HepG2 (cell line): ENCODE measurements at regions of chr15 and their contacts with region 1.

Region 1: DNA sequence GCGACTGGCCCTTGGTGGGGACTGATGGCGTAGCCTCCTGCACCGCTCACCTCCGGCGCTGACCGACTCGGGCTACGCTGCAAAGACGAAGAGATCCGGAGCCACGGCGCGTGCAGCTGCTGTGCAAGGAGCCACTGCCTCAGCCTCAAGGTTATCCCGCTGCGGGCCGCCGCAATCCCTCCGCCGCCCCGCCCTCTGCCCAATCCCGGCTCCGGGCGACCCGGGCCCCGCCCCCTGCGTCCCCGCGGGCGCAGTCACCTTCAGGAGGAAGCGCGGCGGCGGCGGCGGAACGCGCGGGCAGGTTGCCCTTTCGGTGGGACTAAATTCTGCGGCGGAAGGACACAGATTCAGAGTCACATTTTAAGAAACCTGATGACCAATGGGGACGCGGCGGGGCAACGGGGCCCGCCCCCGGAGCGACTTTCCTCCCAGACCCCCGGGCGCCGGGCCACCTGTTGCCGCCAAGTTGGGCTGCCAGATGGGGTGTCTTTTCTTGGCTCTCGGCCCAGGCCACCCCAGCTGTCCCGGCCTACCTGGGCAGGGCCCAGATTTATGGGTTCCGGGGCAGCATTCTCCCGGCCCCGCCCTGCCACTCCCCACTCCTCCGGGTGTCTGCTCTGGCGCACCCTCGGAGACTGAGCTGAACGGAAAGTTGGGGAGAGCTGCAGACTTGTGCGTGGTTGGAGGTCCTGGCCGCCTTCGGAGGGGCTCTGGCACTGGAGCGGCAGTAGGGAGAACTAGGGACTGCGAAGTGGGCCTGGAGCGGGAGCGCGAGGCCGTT is at the start of gene PKM:
- DNase-seq: peak; percentile 93
- ATAC-seq: peak; percentile 79
- H3K4me3 ChIP-seq: peak within 1 kb of the TSS; percentile 81 to 99 (median 96)
- H3K27ac ChIP-seq: peak within 1 kb of the TSS; percentile 77
- H3K4me1 ChIP-seq: peaks cover 60% of the 10 kb centered on the region
- H3K27me3 ChIP-seq: no peaks in the 10 kb centered on the region; a peak in 1 of 5 replicates
- CTCF ChIP-seq: peak; percentile 21; the same call in 1 of the 2 replicates
- EP300 ChIP-seq: 0 out of 4 replicates have a peak, but pooled peaks of 1 of the 2 experiments have one; percentile 18
- POLR2A ChIP-seq: peak; percentile 97 to 99
- RAD21 ChIP-seq: peak; percentile 30; the same call in 1 of the 2 replicates
- total RNA-seq, gene PKM: 488 and 574 TPM in 2 replicates

Region 2: GRCh38 chr15:72110355-72110754 is 120.9 kb before region 1 on chr15:
- CTCF ChIA-PET with region 1: no interaction called
- POLR2A ChIA-PET with region 1: no interaction called
- in situ Hi-C with region 1: no loop called
- intact Hi-C with region 1: loop called (anchors 1 kb)
- DNase-seq: peak; percentile 54
- ATAC-seq: peak; percentile 63
- H3K4me3 ChIP-seq: no peak overlapping the region
- H3K27ac ChIP-seq: no peak overlapping the region
- H3K4me1 ChIP-seq: peaks cover 8% of the 10 kb centered on the region; the same call in 1 of the 2 replicates
- H3K27me3 ChIP-seq: no peaks in the 10 kb centered on the region
- CTCF ChIP-seq: no peak
- EP300 ChIP-seq: no peak
- POLR2A ChIP-seq: no peak
- RAD21 ChIP-seq: no peak

Region 3: GRCh38 chr15:72199711-72200212 is 31.5 kb before region 1 on chr15:
- CTCF ChIA-PET with region 1: no interaction called
- POLR2A ChIA-PET with region 1: interaction called, 9 read pairs
- in situ Hi-C with region 1: no loop called
- intact Hi-C with region 1: loop called (anchors 1 kb)
- DNase-seq: peak; percentile 76
- ATAC-seq: peak; percentile 59
- H3K4me3 ChIP-seq: no peak overlapping the region
- H3K27ac ChIP-seq: no peak overlapping the region
- H3K4me1 ChIP-seq: peaks cover 24% of the 10 kb centered on the region
- H3K27me3 ChIP-seq: peaks cover 6 to 11% of the 10 kb centered on the region in 2 experiments; a peak in 3 of 5 replicates
- CTCF ChIP-seq: peak; percentile 92
- EP300 ChIP-seq: 0 out of 4 replicates have a peak, but pooled peaks of 1 of the 2 experiments have one; percentile 11
- POLR2A ChIP-seq: no peak; a peak in 1 of 4 replicates
- RAD21 ChIP-seq: peak; percentile 90

Region 4: GRCh38 chr15:72206677-72207000 is 24.6 kb before region 1 on chr15:
- CTCF ChIA-PET with region 1: no interaction called
- POLR2A ChIA-PET with region 1: interaction called, 33 read pairs
- in situ Hi-C with region 1: no loop called
- intact Hi-C with region 1: no loop called
- DNase-seq: no peak
- ATAC-seq: no peak
- H3K4me3 ChIP-seq: no peak overlapping the region
- H3K27ac ChIP-seq: no peak overlapping the region
- H3K4me1 ChIP-seq: peaks cover 14% of the 10 kb centered on the region; the same call in 1 of the 2 replicates
- H3K27me3 ChIP-seq: no peaks in the 10 kb centered on the region
- CTCF ChIP-seq: no peak
- EP300 ChIP-seq: no peak
- POLR2A ChIP-seq: no peak
- RAD21 ChIP-seq: no peak

Region 5: DNA sequence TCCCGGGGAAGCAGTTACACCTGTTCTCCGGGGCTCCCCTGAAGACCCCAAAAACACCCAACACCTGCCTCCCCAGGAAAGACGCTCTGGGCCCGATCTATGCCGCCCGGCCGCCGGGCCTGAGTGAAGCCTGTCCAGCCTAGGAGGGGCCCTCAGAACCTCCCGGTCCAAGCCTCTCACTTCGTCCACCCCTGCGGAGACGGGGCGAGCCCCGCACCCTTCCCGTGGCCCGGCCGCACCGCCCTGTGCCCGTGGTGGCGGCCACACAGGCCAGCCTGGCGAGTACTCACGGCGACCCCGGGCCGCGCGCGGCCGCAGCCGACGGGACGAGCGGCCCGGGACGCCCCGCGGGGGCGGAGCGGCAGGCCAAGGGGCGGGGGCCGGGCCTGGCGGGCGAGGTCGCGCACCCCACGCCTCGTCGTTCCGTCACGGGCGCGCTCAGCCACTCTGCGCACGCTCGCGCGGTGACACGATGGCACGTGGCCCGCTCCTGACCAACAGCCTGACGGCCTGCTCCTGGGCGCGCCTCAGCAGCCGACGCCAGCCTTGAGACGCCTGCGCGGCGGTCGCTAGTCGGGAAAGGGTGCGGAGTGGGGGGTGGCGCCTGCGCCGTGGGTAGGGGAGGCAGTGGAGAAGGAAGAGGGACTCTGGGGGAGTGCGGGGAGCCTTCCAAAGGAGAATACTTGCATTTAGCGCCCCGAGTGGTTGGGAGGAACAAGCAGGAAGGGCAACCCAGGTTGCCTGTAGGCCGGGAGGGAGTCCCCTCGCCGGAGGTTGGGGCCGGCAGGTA is 41.2 kb after region 1 on chr15 and contains the start of gene PARP6:
- CTCF ChIA-PET with region 1: no interaction called
- POLR2A ChIA-PET with region 1: no interaction called
- in situ Hi-C with region 1: no loop called
- intact Hi-C with region 1: no loop called
- DNase-seq: no peak
- ATAC-seq: no peak
- H3K4me3 ChIP-seq: no peak within 1 kb of the TSS
- H3K27ac ChIP-seq: no peak within 1 kb of the TSS
- H3K4me1 ChIP-seq: no peaks in the 10 kb centered on the region
- H3K27me3 ChIP-seq: peaks cover 0 to 2% of the 10 kb centered on the region in 2 experiments; a peak in 2 of 5 replicates
- CTCF ChIP-seq: no peak
- EP300 ChIP-seq: no peak
- POLR2A ChIP-seq: no peak
- RAD21 ChIP-seq: no peak
- total RNA-seq, gene PARP6: 0.22 TPM in 1 of 2 replicates, not detected in the other

Region 6: DNA sequence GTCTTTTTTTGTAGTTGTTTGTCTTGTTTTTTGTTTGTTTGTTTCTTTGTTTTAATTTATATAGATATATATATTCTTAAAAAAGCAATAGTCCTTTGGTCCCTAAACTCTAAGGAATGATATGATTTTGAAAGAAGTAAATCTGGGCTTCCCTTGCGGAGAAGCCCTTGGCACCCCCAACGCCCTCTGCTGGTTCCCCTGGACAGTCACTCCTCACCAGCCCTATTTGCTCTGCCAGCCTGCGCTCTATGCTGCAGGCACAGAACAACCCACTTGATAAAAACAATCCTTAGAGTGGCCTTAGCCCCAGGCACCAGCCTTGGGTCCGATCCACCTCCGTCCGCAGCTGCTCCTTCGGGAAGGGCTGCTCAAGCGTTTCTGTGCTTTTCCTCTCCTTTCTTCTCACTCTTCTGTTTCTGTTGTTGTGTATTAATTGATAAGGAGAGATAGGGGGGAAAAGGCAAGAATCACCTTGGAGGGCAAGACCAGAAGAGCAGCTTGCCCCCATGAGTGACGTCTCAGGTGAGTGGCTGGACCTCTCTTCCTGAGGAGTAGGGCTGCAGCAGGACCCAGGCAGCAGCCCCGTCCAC is 54.8 kb after region 1 on chr15:
- CTCF ChIA-PET with region 1: no interaction called
- POLR2A ChIA-PET with region 1: interaction called, 6 read pairs
- in situ Hi-C with region 1: no loop called
- intact Hi-C with region 1: loop called (anchors 2 kb)
- DNase-seq: peak; percentile 28
- ATAC-seq: peak; percentile 77
- H3K4me3 ChIP-seq: no peak overlapping the region
- H3K27ac ChIP-seq: no peak overlapping the region
- H3K4me1 ChIP-seq: peaks cover 21% of the 10 kb centered on the region
- H3K27me3 ChIP-seq: no peaks in the 10 kb centered on the region
- CTCF ChIP-seq: peak; percentile 61
- EP300 ChIP-seq: no peak
- POLR2A ChIP-seq: no peak
- RAD21 ChIP-seq: peak; percentile 30; the same call in 1 of the 2 replicates